HCT116 (cell line): ENCODE measurements at regions of chr1 and their contacts with region 1.

Region 1: GRCh38 chr1:93814059-93814794 is 64.8 kb downstream of the DNTTIP2 start:
- DNase-seq: peak; percentile 82
- ATAC-seq: peak; percentile 81
- H3K4me3 ChIP-seq: no peak overlapping the region
- H3K27ac ChIP-seq: no peak overlapping the region
- H3K4me1 ChIP-seq: peaks cover 8 to 34% of the 10 kb centered on the region in 2 experiments
- H3K27me3 ChIP-seq: no peaks in the 10 kb centered on the region
- CTCF ChIP-seq: peak; percentile 94 to 100 (median 96)
- POLR2A ChIP-seq: no peak
- RAD21 ChIP-seq: peak; percentile 100

Region 2: DNA sequence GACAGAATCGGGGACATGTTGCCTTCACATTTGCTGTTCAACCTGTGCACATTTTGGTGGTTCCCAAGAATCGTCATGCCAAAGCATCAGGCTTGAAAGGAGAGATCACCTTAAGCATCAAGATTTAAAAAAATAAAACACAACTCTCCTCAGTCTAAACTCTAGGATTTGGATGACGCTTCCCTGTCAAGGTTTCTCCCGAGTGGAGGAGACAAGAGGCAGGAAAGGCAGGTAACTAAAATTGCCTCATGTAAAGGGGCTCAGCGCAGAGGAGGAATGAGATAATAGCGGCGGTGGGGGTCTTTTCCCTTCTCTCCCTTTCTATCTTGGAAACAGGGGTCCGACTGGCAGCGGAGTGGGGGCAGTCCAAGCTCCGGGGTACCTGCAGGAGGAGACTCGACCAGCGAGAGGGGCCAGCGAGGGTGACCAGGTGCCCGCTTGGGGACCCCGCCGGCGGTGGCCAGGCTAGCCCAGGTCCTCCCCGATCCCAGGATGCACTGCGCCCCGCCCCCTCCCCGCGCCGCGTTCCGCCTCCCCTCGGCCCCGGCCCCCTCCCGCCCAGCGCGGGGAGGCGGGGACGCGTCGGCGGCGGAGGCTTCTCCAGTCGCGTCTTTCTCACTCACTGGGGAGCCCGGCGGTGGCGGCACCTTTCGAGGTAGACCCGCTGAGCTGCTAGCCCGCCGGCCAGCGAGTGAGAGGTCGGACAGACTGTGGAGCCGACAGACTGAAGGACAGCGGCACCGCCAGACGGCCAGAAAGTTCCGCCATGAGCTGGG is 366.5 kb before region 1 on chr1 and contains the start of gene FNBP1L:
- CTCF ChIA-PET with region 1: interaction called, 5 read pairs
- POLR2A ChIA-PET with region 1: interaction called, 5 read pairs
- RAD21 ChIA-PET with region 1: interaction called in 1 of 2 experiments, 3 read pairs
- intact Hi-C with region 1: loop called (anchors 10 kb)
- DNase-seq: no peak
- ATAC-seq: peak; percentile 81
- H3K4me3 ChIP-seq: peak within 1 kb of the TSS; percentile 64 to 86
- H3K27ac ChIP-seq: peak within 1 kb of the TSS; percentile 84
- H3K4me1 ChIP-seq: peaks cover 10 to 27% of the 10 kb centered on the region in 2 experiments
- H3K27me3 ChIP-seq: no peaks in the 10 kb centered on the region
- CTCF ChIP-seq: no peak
- POLR2A ChIP-seq: peak; percentile 59
- RAD21 ChIP-seq: no peak
- total RNA-seq, gene FNBP1L: 26.1 TPM

Region 3: GRCh38 chr1:93680757-93681550 is 133.3 kb before region 1 on chr1:
- CTCF ChIA-PET with region 1: interaction called, 13 read pairs
- POLR2A ChIA-PET with region 1: interaction called, 6 read pairs
- RAD21 ChIA-PET with region 1: interaction called in 1 of 2 experiments, 4 read pairs
- intact Hi-C with region 1: loop called (anchors 5 kb)
- DNase-seq: peak; percentile 76
- ATAC-seq: peak; percentile 87
- H3K4me3 ChIP-seq: peak overlapping the region; percentile 67 to 77
- H3K27ac ChIP-seq: peak overlapping the region; percentile 70
- H3K4me1 ChIP-seq: peaks cover 0 to 53% of the 10 kb centered on the region in 2 experiments; a peak in 2 of 4 replicates
- H3K27me3 ChIP-seq: no peaks in the 10 kb centered on the region
- CTCF ChIP-seq: peak in 2 of 3 experiments; percentile 58 to 66; a peak in 4 of 6 replicates
- POLR2A ChIP-seq: no peak
- RAD21 ChIP-seq: peak; percentile 59

Region 4: DNA sequence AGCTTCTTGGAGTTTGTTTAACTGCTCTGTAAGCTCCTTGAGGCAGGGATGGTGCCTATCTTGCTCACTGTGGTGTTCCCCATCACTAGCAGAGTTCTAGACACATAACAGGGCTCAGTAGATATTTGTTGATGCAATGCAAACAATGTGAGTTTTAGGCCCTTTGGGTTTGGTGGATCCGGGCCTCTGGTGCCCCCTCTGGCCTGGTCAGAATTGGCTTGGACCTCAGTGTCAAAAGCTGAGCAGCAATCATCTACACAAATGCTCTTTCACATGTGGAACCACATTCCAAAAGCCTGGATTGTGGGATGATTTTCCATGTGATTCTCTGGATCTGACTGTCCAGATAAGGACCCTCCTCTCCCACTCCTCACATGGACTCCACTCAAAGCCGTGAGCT is 79.2 kb before region 1 on chr1:
- CTCF ChIA-PET with region 1: interaction called, 4 read pairs
- POLR2A ChIA-PET with region 1: no interaction called
- RAD21 ChIA-PET with region 1: interaction called in 1 of 2 experiments, 4 read pairs
- intact Hi-C with region 1: loop called (anchors 5 kb)
- DNase-seq: no peak
- ATAC-seq: no peak
- H3K4me3 ChIP-seq: no peak overlapping the region
- H3K27ac ChIP-seq: no peak overlapping the region
- H3K4me1 ChIP-seq: peaks cover 19 to 80% of the 10 kb centered on the region in 2 experiments
- H3K27me3 ChIP-seq: no peaks in the 10 kb centered on the region
- CTCF ChIP-seq: peak in 2 of 3 experiments; percentile 54 to 60; a peak in 4 of 6 replicates
- POLR2A ChIP-seq: no peak
- RAD21 ChIP-seq: peak; percentile 38

Region 5: GRCh38 chr1:93846211-93846991 is 32.2 kb after region 1 on chr1:
- CTCF ChIA-PET with region 1: interaction called, 26 read pairs
- POLR2A ChIA-PET with region 1: no interaction called
- RAD21 ChIA-PET with region 1: interaction called, 9 to 10 read pairs
- intact Hi-C with region 1: no loop called
- DNase-seq: peak; percentile 53
- ATAC-seq: peak; percentile 67
- H3K4me3 ChIP-seq: peak overlapping the region; percentile 59 to 79
- H3K27ac ChIP-seq: peak overlapping the region; percentile 69
- H3K4me1 ChIP-seq: peaks cover 7 to 33% of the 10 kb centered on the region in 2 experiments; a peak in 3 of 4 replicates
- H3K27me3 ChIP-seq: no peaks in the 10 kb centered on the region
- CTCF ChIP-seq: peak in 1 of 3 experiments; percentile 32; a peak in 2 of 6 replicates
- POLR2A ChIP-seq: peak; percentile 36
- RAD21 ChIP-seq: no peak